Common myeloid progenitor, CD34-positive (primary cell): ENCODE measurements at regions of chr3 and their contacts with region 1.

Region 1: GRCh38 chr3:107767897-107768605 is 245.3 kb downstream of the BBX start:
- DNase-seq: peak in 1 of 3 donors; percentile 4
- H3K4me3 ChIP-seq: no peak overlapping the region
- H3K27ac ChIP-seq: no peak overlapping the region
- H3K4me1 ChIP-seq: peaks cover 0 to 5% (median 0%) of the 10 kb centered on the region in 4 experiments
- H3K27me3 ChIP-seq: no peaks in the 10 kb centered on the region

Region 2: GRCh38 chr3:107753480-107753879 is 14.6 kb before region 1 on chr3:
- CTCF ChIA-PET with region 1: interaction called, 12 read pairs
- POLR2A ChIA-PET with region 1: no interaction called
- DNase-seq: peak; percentile 24 to 59 (median 57)
- H3K4me3 ChIP-seq: no peak overlapping the region
- H3K27ac ChIP-seq: no peak overlapping the region
- H3K4me1 ChIP-seq: no peaks in the 10 kb centered on the region
- H3K27me3 ChIP-seq: no peaks in the 10 kb centered on the region

Region 3: GRCh38 chr3:108388136-108389132 is 620.4 kb after region 1 on chr3:
- CTCF ChIA-PET with region 1: no interaction called
- POLR2A ChIA-PET with region 1: no interaction called
- DNase-seq: no peak
- H3K4me3 ChIP-seq: no peak overlapping the region
- H3K27ac ChIP-seq: no peak overlapping the region
- H3K4me1 ChIP-seq: peaks cover 0 to 4% (median 0%) of the 10 kb centered on the region in 4 experiments
- H3K27me3 ChIP-seq: no peaks in the 10 kb centered on the region